BJ (cell line): ENCODE measurements at regions of chr12 and their contacts with region 1.

Region 1: DNA sequence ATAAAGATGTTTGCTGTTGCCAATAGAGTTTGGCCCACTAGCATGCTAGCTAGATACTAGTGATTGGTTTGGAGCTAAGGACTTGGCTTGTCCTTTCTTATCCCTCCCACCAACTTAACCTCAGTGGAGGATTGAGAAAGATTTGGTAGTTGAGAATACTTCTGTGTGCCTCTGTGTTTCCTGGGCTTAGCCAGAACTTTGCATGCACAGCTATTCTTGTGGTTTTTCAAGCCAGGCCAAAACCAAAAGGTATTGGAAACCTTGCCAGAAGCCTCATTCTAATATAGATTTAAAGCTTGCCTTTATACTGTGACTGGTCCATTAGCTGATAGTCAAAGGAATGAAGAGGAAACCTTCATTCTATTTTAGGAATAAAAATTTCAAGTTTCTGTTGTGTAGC is 188.5 kb downstream of the CCDC91 start:
- DNase-seq: peak; percentile 38
- H3K4me3 ChIP-seq: no peak overlapping the region
- H3K27me3 ChIP-seq: no peaks in the 10 kb centered on the region
- CTCF ChIP-seq: no peak

Region 2: DNA sequence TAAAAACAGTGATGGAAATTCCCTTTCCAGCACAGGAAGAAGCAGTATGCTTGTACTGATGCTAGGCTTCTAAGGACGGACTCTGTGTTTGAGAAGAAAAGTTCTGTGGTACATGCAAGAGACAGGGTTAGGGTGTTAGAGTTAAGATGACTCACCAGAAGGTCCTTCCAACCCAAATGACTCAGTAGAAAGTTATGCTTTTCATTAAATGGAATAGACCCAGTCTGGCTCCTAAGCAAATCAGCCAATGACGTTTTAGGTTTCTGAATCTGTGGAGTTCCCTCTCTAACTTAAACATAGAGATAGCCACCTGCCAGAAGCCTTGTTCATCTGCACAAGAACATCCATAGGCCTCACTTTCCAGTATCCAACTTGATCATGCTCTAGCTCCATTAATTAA is 411.9 kb before region 1 on chr12:
- CTCF ChIA-PET with region 1: no interaction called
- POLR2A ChIA-PET with region 1: interaction called, 14 read pairs
- DNase-seq: peak; percentile 79
- H3K4me3 ChIP-seq: no peak overlapping the region
- H3K27me3 ChIP-seq: peaks cover 8% of the 10 kb centered on the region
- CTCF ChIP-seq: no peak

Region 3: DNA sequence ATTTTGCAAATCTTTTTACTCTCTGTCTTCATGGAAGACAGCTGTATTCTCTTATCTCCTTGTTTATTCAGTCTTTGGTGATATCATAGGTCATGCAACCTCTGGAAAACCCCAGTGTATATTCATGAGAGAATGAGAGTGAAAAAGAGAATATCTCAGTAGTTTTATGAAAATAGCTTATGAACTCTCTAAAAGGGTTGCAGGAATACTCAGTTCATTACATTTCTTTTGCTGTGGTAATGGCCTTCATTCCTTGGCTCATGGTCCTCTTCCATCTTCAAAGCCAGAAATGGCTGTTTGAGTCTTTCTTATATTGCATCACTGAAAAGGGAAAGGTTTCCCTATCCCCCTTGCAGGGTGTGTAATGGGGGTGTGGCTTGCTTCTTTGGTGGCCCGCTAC is 38.5 kb before region 1 on chr12:
- CTCF ChIA-PET with region 1: no interaction called
- POLR2A ChIA-PET with region 1: no interaction called
- DNase-seq: peak; percentile 3
- H3K4me3 ChIP-seq: no peak overlapping the region
- H3K27me3 ChIP-seq: no peaks in the 10 kb centered on the region
- CTCF ChIP-seq: no peak

Region 4: DNA sequence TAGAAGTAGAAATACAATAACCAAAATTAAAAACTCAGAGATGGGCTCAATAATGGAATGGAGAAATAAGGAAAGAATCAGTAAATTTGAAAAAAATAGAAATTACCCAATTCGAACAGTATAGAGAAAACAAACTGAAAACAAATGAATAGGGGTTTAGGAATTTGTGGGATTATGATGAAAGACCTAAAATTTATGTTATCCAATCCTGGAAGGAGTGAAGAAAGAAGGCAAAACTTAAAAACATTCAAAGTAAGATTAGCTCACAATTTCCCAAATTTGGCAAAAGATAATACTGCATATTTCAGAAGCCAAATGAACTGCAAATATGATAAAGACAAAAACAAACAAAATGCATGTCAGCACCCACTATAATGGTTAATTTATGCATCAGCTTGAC is 11.4 kb before region 1 on chr12:
- CTCF ChIA-PET with region 1: no interaction called
- POLR2A ChIA-PET with region 1: no interaction called
- DNase-seq: no peak
- H3K4me3 ChIP-seq: no peak overlapping the region
- H3K27me3 ChIP-seq: no peaks in the 10 kb centered on the region
- CTCF ChIP-seq: no peak